ENCODE measurements at regions of chr11 and their contacts with region 1.

Region 1: DNA sequence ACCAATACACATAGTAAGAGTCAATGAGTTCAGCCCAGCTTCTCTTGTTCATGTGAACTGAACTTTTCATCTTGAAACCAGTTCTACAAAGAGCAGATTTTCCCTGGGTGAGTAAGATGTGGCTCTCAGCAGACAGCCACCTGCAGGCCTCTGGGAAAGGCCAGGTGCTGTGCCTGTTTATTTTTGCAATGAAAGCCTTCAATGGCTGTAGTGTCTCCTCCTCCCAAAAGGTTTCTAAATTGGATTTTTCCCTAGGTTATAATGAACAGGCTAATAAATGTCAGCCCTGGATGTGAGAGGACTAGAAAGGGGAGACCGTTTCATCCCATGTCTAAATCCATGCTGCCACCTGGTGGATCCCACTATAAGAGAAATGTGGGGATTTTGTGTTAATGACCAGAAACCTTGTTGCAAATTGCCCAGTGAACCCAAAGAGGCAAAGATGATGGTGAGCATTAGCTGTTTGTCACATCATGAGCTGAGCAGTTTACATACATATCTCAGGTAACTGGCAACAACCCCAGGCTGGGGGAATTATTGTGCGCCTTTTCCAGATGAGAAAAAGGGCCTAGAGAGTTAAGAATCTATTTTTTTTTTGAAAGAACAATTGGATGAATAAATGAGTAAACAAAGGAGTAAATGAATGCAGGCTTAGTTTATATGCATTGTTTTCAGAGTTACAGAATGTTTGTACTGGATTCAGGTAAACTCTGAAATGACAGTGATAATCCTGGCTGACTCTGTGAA is 12.7 kb downstream of the C11orf91 start:
- DNase-seq: peak; percentile 77
- H3K4me3 Mint-ChIP-seq: no peak overlapping the region
- H3K27ac Mint-ChIP-seq: no peak overlapping the region
- H3K4me1 Mint-ChIP-seq: peaks cover 42% of the 10 kb centered on the region
- H3K27me3 Mint-ChIP-seq: no peaks in the 10 kb centered on the region
- CTCF ChIP-seq: peak; percentile 70

Region 2: DNA sequence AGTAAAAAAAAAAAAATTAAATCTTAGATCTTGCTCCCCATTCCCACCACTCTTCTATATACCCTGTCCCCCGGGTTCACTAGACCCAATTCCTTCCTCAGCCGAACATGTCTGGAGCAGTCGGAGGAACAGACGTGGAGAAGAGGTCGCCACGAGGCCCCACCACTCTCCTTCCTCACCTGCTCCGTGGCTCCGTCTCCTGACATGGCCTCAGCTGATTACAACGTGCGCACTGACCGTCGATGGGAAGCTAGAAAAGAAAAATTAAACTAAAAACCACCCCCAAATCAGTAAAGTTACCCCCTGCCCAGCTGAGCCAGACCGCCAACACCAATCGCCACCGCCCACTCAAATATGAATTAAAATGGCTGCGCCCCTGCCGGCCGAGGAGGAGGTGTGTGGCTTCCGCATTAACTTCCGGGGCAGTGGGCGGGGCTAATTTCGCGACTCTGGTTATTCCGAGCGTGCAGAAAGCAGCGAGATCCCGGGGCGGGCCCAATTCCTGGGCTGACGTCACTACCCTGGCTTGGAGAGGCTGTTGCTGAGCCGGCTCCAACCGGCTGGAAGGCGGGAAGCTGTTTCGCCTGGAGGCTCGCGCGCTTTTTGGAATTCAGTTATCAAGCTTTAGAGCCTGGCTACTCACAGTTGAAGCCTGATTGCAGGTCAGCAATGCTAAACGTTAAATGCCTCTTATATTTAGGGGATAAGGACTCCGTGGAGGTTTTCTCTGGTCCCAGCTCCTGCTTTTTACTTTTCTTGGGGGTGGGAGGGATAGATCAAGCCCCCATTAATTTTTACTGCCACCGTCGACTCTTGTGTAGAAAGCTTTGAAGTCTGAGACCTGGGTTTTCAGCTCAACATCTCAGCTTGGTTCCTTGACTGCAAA is 526.5 kb before region 1 on chr11 and contains the start of gene CSTF3:
- CTCF ChIA-PET with region 1: interaction called, 14 read pairs
- POLR2A ChIA-PET with region 1: interaction called, 22 read pairs
- intact Hi-C with region 1: loop called (anchors 1 kb)
- DNase-seq: peak; percentile 99
- H3K4me3 Mint-ChIP-seq: peak within 1 kb of the TSS; percentile 88
- H3K27ac Mint-ChIP-seq: peak within 1 kb of the TSS; percentile 97
- H3K4me1 Mint-ChIP-seq: peaks cover 22% of the 10 kb centered on the region
- H3K27me3 Mint-ChIP-seq: no peaks in the 10 kb centered on the region
- CTCF ChIP-seq: peak; percentile 9
- total RNA-seq, gene CSTF3: 37.5 and 48.4 TPM in 2 replicates

Region 3: GRCh38 chr11:33362051-33362910 is 325.6 kb before region 1 on chr11:
- CTCF ChIA-PET with region 1: interaction called, 175 read pairs
- POLR2A ChIA-PET with region 1: interaction called, 4 read pairs
- intact Hi-C with region 1: loop called (anchors 1 kb)
- DNase-seq: peak; percentile 50
- H3K4me3 Mint-ChIP-seq: no peak overlapping the region
- H3K27ac Mint-ChIP-seq: no peak overlapping the region
- H3K4me1 Mint-ChIP-seq: no peaks in the 10 kb centered on the region
- H3K27me3 Mint-ChIP-seq: no peaks in the 10 kb centered on the region
- CTCF ChIP-seq: peak; percentile 50

Region 4: GRCh38 chr11:33542921-33543320 is 145.0 kb before region 1 on chr11:
- CTCF ChIA-PET with region 1: interaction called, 5 read pairs
- POLR2A ChIA-PET with region 1: interaction called, 3 read pairs
- intact Hi-C with region 1: loop called (anchors 1 kb)
- DNase-seq: peak; percentile 65
- H3K4me3 Mint-ChIP-seq: no peak overlapping the region
- H3K27ac Mint-ChIP-seq: no peak overlapping the region
- H3K4me1 Mint-ChIP-seq: no peaks in the 10 kb centered on the region
- H3K27me3 Mint-ChIP-seq: peaks cover 26% of the 10 kb centered on the region
- CTCF ChIP-seq: peak; percentile 38

Region 5: DNA sequence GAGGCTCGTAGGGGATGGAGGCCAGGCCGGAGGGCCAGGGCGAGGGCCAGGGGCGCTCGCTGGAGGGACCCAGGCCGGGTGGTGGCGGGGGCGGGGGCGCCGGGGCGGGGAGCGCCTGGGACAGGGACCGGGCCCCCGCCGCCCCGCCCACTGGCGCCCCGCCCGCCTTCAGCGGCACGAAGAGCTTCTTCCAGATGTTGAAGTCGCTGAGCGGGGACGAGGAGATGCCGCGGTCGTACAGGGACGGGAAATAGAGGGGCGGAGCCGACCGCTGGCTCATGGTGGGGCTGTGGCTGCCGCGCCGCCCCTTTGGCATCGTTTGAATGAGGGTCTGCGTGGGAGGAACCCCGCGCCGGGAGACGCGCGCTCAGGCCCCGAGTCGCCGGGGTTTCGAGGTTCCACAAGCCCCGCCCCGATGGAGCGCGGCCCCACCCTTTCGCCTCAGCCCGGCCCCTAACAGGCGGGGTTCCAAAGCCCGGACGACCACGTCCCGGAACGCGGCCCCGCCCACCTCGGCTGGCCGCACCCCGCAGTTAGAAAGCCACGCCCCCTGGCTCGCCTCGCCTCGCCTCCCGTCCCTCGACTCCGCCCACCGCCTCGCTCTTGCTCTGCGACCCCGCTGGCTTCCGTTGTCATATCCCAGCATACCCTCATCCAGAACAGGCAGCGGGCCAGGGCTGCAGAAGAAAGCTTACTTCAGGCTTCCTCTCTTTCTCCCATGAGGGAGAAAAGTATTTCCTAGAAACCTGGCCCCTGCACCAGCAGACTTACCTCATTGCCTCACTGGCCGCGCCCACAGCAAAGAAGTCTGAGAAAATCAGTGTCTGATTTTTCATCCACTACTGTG is 12.7 kb after region 1 on chr11 and contains the start of gene C11orf91:
- CTCF ChIA-PET with region 1: interaction called, 16 read pairs
- POLR2A ChIA-PET with region 1: interaction called, 124 read pairs
- intact Hi-C with region 1: loop called (anchors 1 kb)
- DNase-seq: peak; percentile 94
- H3K4me3 Mint-ChIP-seq: peak within 1 kb of the TSS; percentile 79
- H3K27ac Mint-ChIP-seq: peak within 1 kb of the TSS; percentile 92
- H3K4me1 Mint-ChIP-seq: peaks cover 45% of the 10 kb centered on the region
- H3K27me3 Mint-ChIP-seq: no peaks in the 10 kb centered on the region
- CTCF ChIP-seq: no peak
- total RNA-seq, gene C11orf91: 2.8 and 2.9 TPM in 2 replicates

Region 6: DNA sequence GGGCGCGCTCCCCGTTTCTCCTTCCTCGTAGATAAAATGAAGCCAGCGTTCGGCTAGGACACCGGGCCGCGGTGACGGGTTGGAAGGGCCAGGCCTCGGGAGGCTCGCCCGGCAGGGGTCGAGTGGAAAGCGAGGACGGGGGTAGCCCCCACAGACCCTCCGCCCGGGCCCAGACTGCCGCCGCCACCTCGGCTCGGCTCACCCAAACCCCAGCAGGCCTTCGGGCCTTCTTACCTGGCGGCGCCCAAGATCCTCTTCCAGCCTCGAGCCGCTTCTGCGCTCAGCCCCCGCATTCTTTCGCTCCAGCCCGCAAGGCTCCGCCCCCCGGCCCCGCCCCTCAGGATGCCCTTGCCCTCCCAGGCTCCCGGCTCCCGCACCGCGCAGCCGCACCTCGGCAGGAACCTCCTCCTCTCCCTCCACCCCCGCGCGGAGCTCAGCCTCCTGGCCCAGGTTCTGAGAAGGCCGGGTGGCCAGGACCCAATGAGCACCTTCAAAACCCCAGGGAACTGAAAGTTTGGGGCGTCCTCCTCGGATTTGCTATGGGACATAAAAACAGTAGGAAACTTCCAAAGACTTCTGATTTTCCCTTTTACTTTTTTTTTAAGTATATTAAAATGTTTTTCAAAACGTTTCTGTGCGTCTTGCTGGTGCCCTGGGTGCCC is 48.4 kb after region 1 on chr11 and contains the start of gene CD59:
- CTCF ChIA-PET with region 1: interaction called, 14 read pairs
- POLR2A ChIA-PET with region 1: interaction called, 73 read pairs
- intact Hi-C with region 1: loop called (anchors 1 kb)
- DNase-seq: peak; percentile 96
- H3K4me3 Mint-ChIP-seq: peak within 1 kb of the TSS; percentile 88
- H3K27ac Mint-ChIP-seq: peak within 1 kb of the TSS; percentile 90
- H3K4me1 Mint-ChIP-seq: peaks cover 49% of the 10 kb centered on the region
- H3K27me3 Mint-ChIP-seq: no peaks in the 10 kb centered on the region
- CTCF ChIP-seq: no peak
- total RNA-seq, gene CD59: 597 and 618 TPM in 2 replicates

Region 7: DNA sequence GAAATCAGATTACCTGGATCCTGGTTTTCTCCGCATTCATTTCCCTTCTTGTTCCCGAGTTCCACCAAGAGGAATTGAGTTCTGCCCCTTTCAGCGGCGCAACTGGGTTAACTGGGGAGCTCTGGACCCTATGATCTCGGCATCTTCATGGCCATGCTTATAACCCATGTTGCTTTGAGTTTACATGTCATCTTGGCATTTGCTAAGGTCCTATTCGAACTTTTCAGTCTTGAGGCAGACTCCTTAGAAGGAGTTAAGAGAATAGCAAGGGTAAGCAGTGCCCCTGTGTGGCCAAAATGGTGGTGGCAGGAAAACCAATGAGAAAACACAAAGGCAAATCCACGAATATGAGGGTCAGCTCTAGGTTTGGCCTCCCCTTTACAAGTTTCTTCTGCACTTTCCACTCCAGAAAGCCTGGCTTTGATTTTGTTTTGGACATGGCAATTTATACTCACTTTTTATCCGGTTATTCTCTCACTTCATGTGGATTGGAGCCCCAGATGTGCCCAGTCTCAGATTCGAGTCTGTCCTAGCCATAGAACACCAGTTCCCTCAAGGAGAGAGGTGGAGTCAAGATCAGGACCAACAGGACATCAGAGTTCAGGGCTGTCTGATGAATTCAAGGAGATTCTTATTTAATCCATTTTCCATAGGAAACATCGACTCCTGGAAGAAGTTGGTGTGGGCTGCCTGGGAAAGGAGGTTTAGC is 141.7 kb after region 1 on chr11:
- CTCF ChIA-PET with region 1: interaction called, 3 read pairs
- POLR2A ChIA-PET with region 1: interaction called, 7 read pairs
- intact Hi-C with region 1: loop called (anchors 5 kb)
- DNase-seq: peak; percentile 77
- H3K4me3 Mint-ChIP-seq: peak overlapping the region; percentile 62
- H3K27ac Mint-ChIP-seq: peak overlapping the region; percentile 42
- H3K4me1 Mint-ChIP-seq: peaks cover 6% of the 10 kb centered on the region
- H3K27me3 Mint-ChIP-seq: peaks cover 15% of the 10 kb centered on the region
- CTCF ChIP-seq: peak; percentile 82

Measured in MCF 10A (cell line).